Endothelial cell of umbilical vein (primary cell): ENCODE measurements at regions of chr10 and their contacts with region 1.

Region 1: DNA sequence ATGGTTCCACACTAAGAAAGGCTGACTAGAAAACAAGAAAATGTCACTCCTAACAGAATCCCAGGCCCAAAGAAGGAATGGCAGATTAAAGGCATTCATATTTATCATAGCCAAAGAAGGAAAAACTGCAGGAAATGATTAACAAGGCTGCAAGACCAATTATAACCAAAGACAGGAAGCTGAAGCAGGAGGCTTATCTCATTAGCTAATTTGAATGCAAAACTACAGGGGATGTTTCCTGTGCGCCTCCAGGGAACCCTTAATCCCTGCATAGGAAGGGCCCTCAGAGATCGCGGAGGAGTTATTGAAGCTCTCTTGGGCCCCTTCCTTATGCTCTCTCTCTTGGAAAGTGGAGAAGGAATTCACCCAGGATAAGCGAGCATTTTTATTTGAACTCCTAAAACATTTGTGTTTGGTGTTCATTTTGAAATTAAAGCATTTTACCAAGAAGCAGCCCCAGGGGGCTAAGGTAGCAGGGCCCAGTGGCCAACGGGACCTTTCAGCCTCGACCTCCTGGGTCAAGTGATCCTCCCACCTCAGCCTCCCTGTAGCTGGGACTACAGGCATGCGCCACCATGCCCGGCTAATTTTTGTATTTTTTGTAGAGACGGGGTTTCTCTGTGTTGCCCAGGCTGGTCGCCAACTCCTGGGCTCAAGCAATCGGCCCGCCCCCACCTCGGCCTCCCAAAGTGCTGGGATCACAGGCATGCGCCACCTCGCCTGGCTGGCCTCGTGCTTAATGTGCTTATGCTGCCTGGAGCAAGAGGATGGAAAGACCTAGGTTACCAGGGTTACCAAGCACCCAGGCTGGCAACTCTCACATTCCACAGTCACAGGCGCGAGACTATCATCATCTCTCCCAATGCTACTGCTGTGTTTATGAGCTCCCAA is 24.1 kb upstream of the PROSER2 start:
- DNase-seq: peak; percentile 90
- H3K4me3 ChIP-seq: no peak overlapping the region
- H3K27ac ChIP-seq: peak overlapping the region; percentile 66
- H3K4me1 ChIP-seq: peaks cover 17% of the 10 kb centered on the region
- H3K27me3 ChIP-seq: no peaks in the 10 kb centered on the region
- CTCF ChIP-seq: no peak
- POLR2A ChIP-seq: peak; percentile 61

Region 2: GRCh38 chr10:11810313-11810766 is 11.2 kb after region 1 on chr10:
- CTCF ChIA-PET with region 1: interaction called, 42 read pairs
- POLR2A ChIA-PET with region 1: interaction called, 12 read pairs
- dilution Hi-C with region 1: no loop called
- intact Hi-C with region 1: loop called (anchors 1 kb)
- DNase-seq: peak; percentile 15
- H3K4me3 ChIP-seq: no peak overlapping the region
- H3K27ac ChIP-seq: no peak overlapping the region
- H3K4me1 ChIP-seq: peaks cover 20% of the 10 kb centered on the region
- H3K27me3 ChIP-seq: no peaks in the 10 kb centered on the region
- CTCF ChIP-seq: no peak
- POLR2A ChIP-seq: no peak

Region 3: GRCh38 chr10:11874542-11875177 is 75.6 kb after region 1 on chr10:
- CTCF ChIA-PET with region 1: no interaction called
- POLR2A ChIA-PET with region 1: interaction called, 3 read pairs
- dilution Hi-C with region 1: no loop called
- intact Hi-C with region 1: loop called (anchors 5 kb)
- DNase-seq: peak; percentile 14
- H3K4me3 ChIP-seq: no peak overlapping the region
- H3K27ac ChIP-seq: no peak overlapping the region
- H3K4me1 ChIP-seq: peaks cover 29% of the 10 kb centered on the region
- H3K27me3 ChIP-seq: no peaks in the 10 kb centered on the region
- CTCF ChIP-seq: no peak
- POLR2A ChIP-seq: no peak